ENCODE measurements at regions of chr2 and their contacts with region 1.

Region 1: GRCh38 chr2:152418688-152419087 is 83.7 kb downstream of the FMNL2 start:
- DNase-seq: no peak
- H3K4me3 ChIP-seq: no peak overlapping the region
- H3K27ac ChIP-seq: no peak overlapping the region
- H3K4me1 ChIP-seq: peaks cover 0 to 17% (median 2%) of the 10 kb centered on the region in 4 donors
- H3K27me3 ChIP-seq: no peaks in the 10 kb centered on the region
- CTCF ChIP-seq: no peak
- EP300 ChIP-seq: no peak
- POLR2A ChIP-seq: no peak

Region 2: GRCh38 chr2:152347076-152347475 is 71.6 kb before region 1 on chr2:
- in situ Hi-C with region 1: no loop called
- intact Hi-C with region 1: loop called (anchors 10 kb)
- DNase-seq: no peak
- H3K4me3 ChIP-seq: no peak overlapping the region
- H3K27ac ChIP-seq: no peak overlapping the region
- H3K4me1 ChIP-seq: peaks cover 0 to 4% (median 0%) of the 10 kb centered on the region in 4 donors
- H3K27me3 ChIP-seq: no peaks in the 10 kb centered on the region
- CTCF ChIP-seq: no peak
- EP300 ChIP-seq: no peak
- POLR2A ChIP-seq: no peak

Measured in transverse colon (tissue), 4 donors.